ENCODE measurements at regions of chr6 and their contacts with region 1.

Region 1: DNA sequence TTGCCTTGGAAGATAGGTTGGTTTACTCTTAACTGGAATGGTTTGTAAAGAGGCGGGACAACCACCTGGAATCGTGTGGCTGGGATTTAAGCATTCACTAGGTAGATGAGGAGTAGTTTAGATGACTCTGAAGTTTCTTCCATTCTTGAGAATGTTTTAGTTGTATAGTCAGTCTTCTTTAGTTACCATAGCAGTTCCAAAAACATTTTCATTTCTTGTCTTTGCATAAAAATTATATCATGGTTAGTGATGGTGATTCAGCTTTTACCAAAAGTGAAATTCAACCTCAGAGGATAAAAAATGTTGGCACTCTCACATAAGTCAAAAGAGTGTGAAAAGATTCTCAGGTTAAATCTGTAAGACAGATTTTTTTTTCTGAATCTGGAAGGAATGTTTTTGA is 70.3 kb downstream of the SMAP1 start:
- DNase-seq: no peak
- H3K4me3 ChIP-seq: no peak overlapping the region
- H3K27ac ChIP-seq: no peak overlapping the region
- H3K4me1 ChIP-seq: no peaks in the 10 kb centered on the region
- H3K27me3 ChIP-seq: no peaks in the 10 kb centered on the region
- CTCF ChIP-seq: no peak
- EP300 ChIP-seq: no peak
- POLR2A ChIP-seq: no peak

Region 2: GRCh38 chr6:69105288-69105687 is 1632.7 kb before region 1 on chr6:
- intact Hi-C with region 1: loop called in 1 of 4 experiments (anchors 10 kb)
- DNase-seq: no peak
- H3K4me3 ChIP-seq: no peak overlapping the region
- H3K27ac ChIP-seq: no peak overlapping the region
- H3K4me1 ChIP-seq: no peaks in the 10 kb centered on the region
- H3K27me3 ChIP-seq: no peaks in the 10 kb centered on the region
- CTCF ChIP-seq: no peak
- EP300 ChIP-seq: no peak
- POLR2A ChIP-seq: no peak

Region 3: DNA sequence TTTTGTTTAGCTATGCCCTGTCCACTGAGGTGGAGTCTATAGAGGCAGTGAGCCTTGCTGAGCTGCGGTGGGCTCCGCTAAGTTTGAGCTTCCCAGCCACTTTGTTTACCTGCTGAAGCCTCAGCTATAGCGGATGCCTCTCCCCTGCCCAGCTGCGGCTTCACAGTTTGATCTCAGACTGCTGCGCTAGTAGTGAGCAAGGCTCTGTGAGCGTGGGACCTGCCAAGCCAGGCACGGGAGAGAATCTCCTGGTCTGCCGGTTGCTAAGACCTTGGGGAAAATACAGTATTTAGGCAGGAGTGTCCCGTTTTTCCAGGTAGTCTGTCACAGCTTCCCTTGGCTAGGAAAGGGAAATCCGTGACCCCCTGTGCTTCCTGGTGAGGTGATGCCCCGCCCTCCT is 68.1 kb after region 1 on chr6:
- intact Hi-C with region 1: loop called in 1 of 4 experiments (anchors 1 kb)
- DNase-seq: no peak
- H3K4me3 ChIP-seq: no peak overlapping the region
- H3K27ac ChIP-seq: no peak overlapping the region
- H3K4me1 ChIP-seq: no peaks in the 10 kb centered on the region
- H3K27me3 ChIP-seq: no peaks in the 10 kb centered on the region
- CTCF ChIP-seq: no peak
- EP300 ChIP-seq: no peak
- POLR2A ChIP-seq: no peak